Colonic mucosa (tissue), 4 donors: ENCODE measurements at regions of chr11 and their contacts with region 1.

Region 1: GRCh38 chr11:61803889-61804647 is 11.4 kb downstream of the FEN1 start:
- DNase-seq: no peak
- H3K4me3 ChIP-seq: no peak overlapping the region
- H3K27ac ChIP-seq: no peak overlapping the region
- H3K4me1 ChIP-seq: no peaks in the 10 kb centered on the region
- H3K27me3 ChIP-seq: no peaks in the 10 kb centered on the region
- CTCF ChIP-seq: no peak

Region 2: DNA sequence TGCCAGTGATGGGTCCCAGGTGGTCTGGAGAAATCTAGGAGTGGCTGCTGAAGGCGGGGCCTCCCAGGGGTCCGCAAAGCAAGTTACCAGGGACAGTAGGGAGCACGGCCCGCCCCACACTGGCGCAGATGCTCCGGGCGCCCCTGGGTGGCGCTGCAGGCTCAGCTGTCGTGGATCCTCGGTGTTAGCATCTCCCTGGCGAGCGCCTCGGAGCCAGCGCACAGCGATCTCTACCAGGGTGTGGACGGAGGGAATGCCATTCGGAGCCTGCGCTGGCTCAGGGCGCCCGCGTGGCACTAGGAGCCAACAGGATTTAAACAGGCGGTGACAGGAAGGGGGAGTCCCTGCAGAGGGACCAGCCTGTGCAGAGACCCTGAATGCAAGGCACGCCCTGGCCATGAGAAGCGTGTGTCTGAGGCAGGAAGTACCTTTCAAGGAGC is 67.1 kb after region 1 on chr11:
- intact Hi-C with region 1: loop called (anchors 10 kb)
- DNase-seq: peak; percentile 66
- H3K4me3 ChIP-seq: no peak overlapping the region
- H3K27ac ChIP-seq: no peak overlapping the region
- H3K4me1 ChIP-seq: no peaks in the 10 kb centered on the region
- H3K27me3 ChIP-seq: no peaks in the 10 kb centered on the region
- CTCF ChIP-seq: peak; percentile 80

Region 3: DNA sequence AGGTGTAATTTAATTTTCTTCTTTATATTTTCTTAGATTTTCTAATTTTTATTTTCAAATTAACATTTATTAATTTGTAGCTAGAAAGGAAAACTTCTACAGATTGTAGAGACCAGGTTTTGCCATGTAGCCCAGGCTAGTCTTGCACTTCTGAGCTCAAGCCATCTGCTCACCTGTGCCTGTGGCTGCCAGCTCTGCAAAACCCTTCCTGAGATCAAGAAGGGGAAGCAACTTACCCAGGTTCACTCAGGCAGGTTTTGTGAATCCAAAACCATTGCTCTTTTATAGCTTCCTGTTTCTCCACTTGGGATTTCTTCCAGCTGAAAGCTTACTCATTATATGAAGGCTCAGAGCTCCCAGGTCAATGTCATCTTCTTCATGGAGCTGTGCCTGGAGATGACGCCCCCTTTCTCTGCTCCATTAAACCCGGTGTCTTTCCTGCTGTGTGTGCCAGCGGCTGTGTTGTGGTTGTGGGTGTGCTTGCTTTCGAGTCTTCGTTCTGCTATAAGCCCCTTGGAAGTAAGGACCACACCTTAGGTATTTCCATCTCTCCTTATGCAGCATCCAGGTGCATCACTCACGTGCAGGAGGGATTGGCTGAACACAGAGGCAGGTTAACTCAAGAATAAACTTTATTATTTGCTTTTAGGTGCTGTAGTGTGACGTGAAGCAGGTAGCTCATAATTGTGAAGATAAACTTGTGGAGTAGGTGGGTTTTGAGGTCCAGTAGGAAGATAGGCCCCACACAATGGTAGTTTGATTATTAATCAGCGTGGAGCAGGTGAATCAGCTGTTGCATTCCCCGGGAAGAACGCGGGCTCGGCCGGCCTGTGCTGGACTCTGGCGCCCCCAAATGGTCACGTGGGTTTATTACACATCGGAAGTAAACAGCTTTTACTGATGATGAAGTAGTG is 277.6 kb after region 1 on chr11:
- intact Hi-C with region 1: loop called (anchors 5 kb)
- DNase-seq: peak; percentile 83
- H3K4me3 ChIP-seq: no peak overlapping the region
- H3K27ac ChIP-seq: no peak overlapping the region
- H3K4me1 ChIP-seq: no peaks in the 10 kb centered on the region
- H3K27me3 ChIP-seq: no peaks in the 10 kb centered on the region
- CTCF ChIP-seq: peak; percentile 91